ENCODE measurements at regions of chr10 and their contacts with region 1.

Region 1: GRCh38 chr10:3636356-3637181 is 148.4 kb downstream of the KLF6 start:
- DNase-seq: peak; percentile 79 to 86
- H3K4me3 ChIP-seq: peak overlapping the region; percentile 50; the same call in 1 of the 2 replicates
- H3K27ac ChIP-seq: peak overlapping the region; percentile 94
- H3K4me1 ChIP-seq: peaks cover 58% of the 10 kb centered on the region
- H3K27me3 ChIP-seq: no peaks in the 10 kb centered on the region
- CTCF ChIP-seq: no peak

Region 2: GRCh38 chr10:3197348-3198003 is 439.1 kb before region 1 on chr10:
- CTCF ChIA-PET with region 1: interaction called, 3 read pairs
- POLR2A ChIA-PET with region 1: no interaction called
- intact Hi-C with region 1: loop called (anchors 5 kb)
- DNase-seq: peak; percentile 85 to 86
- H3K4me3 ChIP-seq: peak overlapping the region; percentile 53; the same call in 1 of the 2 replicates
- H3K27ac ChIP-seq: peak overlapping the region; percentile 79
- H3K4me1 ChIP-seq: peaks cover 10% of the 10 kb centered on the region
- H3K27me3 ChIP-seq: no peaks in the 10 kb centered on the region
- CTCF ChIP-seq: peak; percentile 79

Region 3: GRCh38 chr10:3538658-3539531 is 97.7 kb before region 1 on chr10:
- CTCF ChIA-PET with region 1: no interaction called
- POLR2A ChIA-PET with region 1: interaction called, 29 read pairs
- intact Hi-C with region 1: no loop called
- DNase-seq: peak; percentile 43 to 60
- H3K4me3 ChIP-seq: no peak overlapping the region
- H3K27ac ChIP-seq: no peak overlapping the region
- H3K4me1 ChIP-seq: peaks cover 17% of the 10 kb centered on the region
- H3K27me3 ChIP-seq: no peaks in the 10 kb centered on the region
- CTCF ChIP-seq: no peak

Region 4: GRCh38 chr10:3668276-3668965 is 31.9 kb after region 1 on chr10:
- CTCF ChIA-PET with region 1: interaction called, 19 read pairs
- POLR2A ChIA-PET with region 1: no interaction called
- intact Hi-C with region 1: loop called (anchors 1 kb)
- DNase-seq: peak; percentile 87 to 94
- H3K4me3 ChIP-seq: peak overlapping the region; percentile 50; the same call in 1 of the 2 replicates
- H3K27ac ChIP-seq: peak overlapping the region; percentile 99
- H3K4me1 ChIP-seq: peaks cover 23% of the 10 kb centered on the region
- H3K27me3 ChIP-seq: no peaks in the 10 kb centered on the region
- CTCF ChIP-seq: no peak

Region 5: DNA sequence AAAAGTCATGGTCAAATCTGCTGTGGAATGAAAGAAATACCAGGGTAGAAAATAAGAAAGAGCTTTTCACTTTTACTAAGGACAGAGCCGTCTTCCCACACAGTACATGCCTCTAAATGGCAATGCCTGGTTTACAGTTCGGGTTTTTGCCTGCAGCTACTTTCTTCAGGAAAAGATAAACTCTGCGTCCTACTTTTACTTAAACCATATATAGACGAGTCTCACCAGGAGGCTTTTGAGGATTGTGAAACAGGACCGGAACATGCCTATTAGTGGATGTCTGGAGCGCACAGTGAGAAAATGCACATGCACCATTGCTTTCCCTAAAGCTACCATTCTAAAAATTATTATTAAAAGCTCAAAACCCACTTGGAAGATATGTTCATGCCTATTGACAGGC is 78.0 kb after region 1 on chr10:
- CTCF ChIA-PET with region 1: no interaction called
- POLR2A ChIA-PET with region 1: no interaction called
- intact Hi-C with region 1: no loop called
- DNase-seq: no peak
- H3K4me3 ChIP-seq: no peak overlapping the region
- H3K27ac ChIP-seq: no peak overlapping the region
- H3K4me1 ChIP-seq: no peaks in the 10 kb centered on the region
- H3K27me3 ChIP-seq: no peaks in the 10 kb centered on the region
- CTCF ChIP-seq: no peak

Region 6: GRCh38 chr10:3776796-3777571 is 140.4 kb after region 1 on chr10:
- CTCF ChIA-PET with region 1: no interaction called
- POLR2A ChIA-PET with region 1: interaction called, 4 read pairs
- intact Hi-C with region 1: loop called (anchors 1 kb)
- DNase-seq: peak; percentile 74 to 96
- H3K4me3 ChIP-seq: no peak overlapping the region; the same call in 1 of the 2 replicates
- H3K27ac ChIP-seq: peak overlapping the region; percentile 87
- H3K4me1 ChIP-seq: peaks cover 67% of the 10 kb centered on the region
- H3K27me3 ChIP-seq: no peaks in the 10 kb centered on the region
- CTCF ChIP-seq: no peak

Region 7: DNA sequence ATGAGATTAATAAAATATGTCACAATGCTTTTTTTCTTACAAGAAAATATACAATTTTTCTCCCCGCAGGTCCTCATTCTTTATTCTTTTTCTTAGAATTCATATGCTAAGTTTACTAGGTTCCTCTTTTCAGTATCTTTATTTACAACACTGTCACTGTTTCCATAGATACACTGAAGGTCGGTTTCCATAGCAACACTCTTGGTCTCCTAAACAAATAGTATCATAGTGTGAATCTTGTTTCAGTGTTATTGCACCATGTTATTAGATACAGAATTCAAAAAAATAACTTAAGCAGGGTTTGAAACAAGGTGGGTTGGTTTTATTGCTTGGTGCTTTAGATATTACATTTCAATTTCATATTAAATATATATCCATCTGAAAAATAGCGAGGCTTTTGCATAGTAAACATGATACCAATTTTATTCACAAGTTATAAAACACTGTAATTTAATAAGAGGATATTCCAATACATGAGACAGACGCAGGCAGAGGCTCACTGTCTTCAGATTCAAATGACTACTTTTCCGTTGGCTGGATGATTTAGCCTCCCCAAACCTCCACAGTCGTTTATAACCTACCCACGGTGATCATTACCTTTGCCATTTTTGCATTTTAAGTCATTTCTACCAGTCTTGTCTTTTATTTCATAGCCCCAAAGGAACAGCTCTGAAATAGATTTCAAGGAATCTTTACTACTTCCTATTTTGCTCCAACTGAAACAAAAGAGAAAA is 237.3 kb after region 1 on chr10:
- CTCF ChIA-PET with region 1: no interaction called
- POLR2A ChIA-PET with region 1: no interaction called
- intact Hi-C with region 1: no loop called
- DNase-seq: peak in 1 of 2 experiments; percentile 69
- H3K4me3 ChIP-seq: no peak overlapping the region
- H3K27ac ChIP-seq: no peak overlapping the region
- H3K4me1 ChIP-seq: peaks cover 6% of the 10 kb centered on the region
- H3K27me3 ChIP-seq: no peaks in the 10 kb centered on the region
- CTCF ChIP-seq: no peak

Region 8: GRCh38 chr10:3887885-3888476 is 251.4 kb after region 1 on chr10:
- CTCF ChIA-PET with region 1: no interaction called
- POLR2A ChIA-PET with region 1: interaction called, 21 read pairs
- intact Hi-C with region 1: no loop called
- DNase-seq: peak; percentile 50 to 89
- H3K4me3 ChIP-seq: no peak overlapping the region
- H3K27ac ChIP-seq: peak overlapping the region; percentile 90
- H3K4me1 ChIP-seq: peaks cover 41% of the 10 kb centered on the region
- H3K27me3 ChIP-seq: no peaks in the 10 kb centered on the region
- CTCF ChIP-seq: no peak